HepG2 (cell line): ENCODE measurements at regions of chr2 and their contacts with region 1.

Region 1: DNA sequence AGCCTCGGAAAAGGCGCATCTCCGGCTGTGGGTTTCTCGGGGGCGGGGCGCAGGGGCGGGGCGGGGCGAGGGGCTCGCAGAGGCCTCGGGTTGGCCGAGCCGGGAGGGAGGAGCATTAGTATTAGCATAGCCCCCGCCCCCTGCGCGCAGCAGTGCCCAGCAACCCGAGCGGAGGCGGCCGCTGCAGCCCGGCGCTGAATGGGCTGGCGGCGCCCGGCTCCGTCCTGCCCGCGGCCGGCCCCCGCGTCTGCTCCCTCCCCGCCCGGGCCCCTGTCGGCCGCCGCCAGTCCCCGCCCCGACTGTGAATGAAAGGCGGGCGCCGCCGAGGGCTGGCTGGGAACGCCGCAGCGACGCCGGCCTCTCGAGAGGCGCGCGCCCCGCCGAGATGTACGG is at the start of gene EFR3B:
- DNase-seq: peak; percentile 89
- ATAC-seq: peak; percentile 97
- H3K4me3 ChIP-seq: peak within 1 kb of the TSS; percentile 64 to 80 (median 80)
- H3K27ac ChIP-seq: no peak within 1 kb of the TSS
- H3K4me1 ChIP-seq: peaks cover 21% of the 10 kb centered on the region
- H3K27me3 ChIP-seq: peaks cover 0 to 48% of the 10 kb centered on the region in 2 experiments; a peak in 3 of 5 replicates
- CTCF ChIP-seq: no peak
- EP300 ChIP-seq: no peak
- POLR2A ChIP-seq: no peak
- RAD21 ChIP-seq: no peak
- total RNA-seq, gene EFR3B: 0.42 and 0.56 TPM in 2 replicates

Region 2: GRCh38 chr2:24021193-24021998 is 1020.5 kb before region 1 on chr2:
- CTCF ChIA-PET with region 1: no interaction called
- POLR2A ChIA-PET with region 1: no interaction called
- in situ Hi-C with region 1: no loop called
- intact Hi-C with region 1: no loop called
- DNase-seq: peak; percentile 61
- ATAC-seq: peak; percentile 84
- H3K4me3 ChIP-seq: no peak overlapping the region
- H3K27ac ChIP-seq: peak overlapping the region; percentile 41
- H3K4me1 ChIP-seq: peaks cover 43% of the 10 kb centered on the region
- H3K27me3 ChIP-seq: no peaks in the 10 kb centered on the region
- CTCF ChIP-seq: peak; percentile 95
- EP300 ChIP-seq: no peak
- POLR2A ChIP-seq: no peak
- RAD21 ChIP-seq: peak; percentile 97

Region 3: GRCh38 chr2:24509425-24509824 is 532.5 kb before region 1 on chr2:
- CTCF ChIA-PET with region 1: no interaction called
- POLR2A ChIA-PET with region 1: no interaction called
- in situ Hi-C with region 1: no loop called
- intact Hi-C with region 1: no loop called
- DNase-seq: no peak
- ATAC-seq: no peak
- H3K4me3 ChIP-seq: no peak overlapping the region
- H3K27ac ChIP-seq: no peak overlapping the region
- H3K4me1 ChIP-seq: no peaks in the 10 kb centered on the region
- H3K27me3 ChIP-seq: no peaks in the 10 kb centered on the region
- CTCF ChIP-seq: no peak
- EP300 ChIP-seq: no peak
- POLR2A ChIP-seq: no peak
- RAD21 ChIP-seq: no peak

Region 4: DNA sequence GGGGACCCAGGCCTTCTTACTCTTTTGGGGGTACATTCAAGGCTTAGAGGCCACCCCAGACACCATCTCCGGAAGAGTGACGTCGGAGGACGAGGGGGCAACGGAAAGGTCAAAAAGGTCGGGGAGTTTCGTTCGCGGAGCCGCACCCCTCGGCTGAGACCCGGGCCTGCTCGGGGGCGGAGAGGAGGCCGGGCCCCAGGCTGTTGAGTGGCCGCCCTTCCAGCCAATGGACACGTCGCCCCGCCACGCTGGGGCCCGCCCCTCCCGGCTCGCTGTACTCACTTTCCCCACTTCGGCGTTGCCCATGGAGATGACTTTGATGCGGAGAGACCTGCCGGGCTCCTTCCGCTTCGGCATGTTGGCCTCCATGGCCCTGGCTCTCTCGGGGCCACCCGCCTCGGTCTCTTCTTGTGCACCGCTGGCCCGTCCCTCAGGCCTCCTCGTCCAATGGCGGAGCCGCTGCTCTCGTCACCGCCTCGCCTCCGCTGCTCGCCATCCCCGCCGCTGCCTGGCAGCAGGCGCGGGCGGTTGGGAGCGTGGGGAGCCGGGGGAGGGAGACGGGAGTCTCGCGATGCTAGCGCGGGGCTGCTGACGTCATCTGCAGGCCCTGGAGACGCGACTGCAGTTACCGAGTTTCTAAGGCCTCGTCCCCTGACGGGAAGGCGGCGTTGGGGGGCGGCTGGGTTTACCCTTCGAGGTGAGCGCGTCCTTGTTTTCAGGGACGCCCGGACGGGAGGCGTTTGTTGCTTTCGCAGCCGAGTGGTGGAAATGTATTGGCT is 70.2 kb before region 1 on chr2 and contains the start of gene DNAJC27:
- CTCF ChIA-PET with region 1: interaction called, 4 read pairs
- POLR2A ChIA-PET with region 1: interaction called, 6 read pairs
- in situ Hi-C with region 1: no loop called
- intact Hi-C with region 1: loop called (anchors 1 kb)
- DNase-seq: peak; percentile 95
- ATAC-seq: peak; percentile 97
- H3K4me3 ChIP-seq: peak within 1 kb of the TSS; percentile 80 to 90 (median 88)
- H3K27ac ChIP-seq: peak within 1 kb of the TSS; percentile 95
- H3K4me1 ChIP-seq: peaks cover 23% of the 10 kb centered on the region
- H3K27me3 ChIP-seq: no peaks in the 10 kb centered on the region; a peak in 1 of 5 replicates
- CTCF ChIP-seq: peak; percentile 20; the same call in 1 of the 2 replicates
- EP300 ChIP-seq: 0 out of 4 replicates have a peak, but pooled peaks of 1 of the 2 experiments have one; percentile 9
- POLR2A ChIP-seq: peak; percentile 95
- RAD21 ChIP-seq: peak; percentile 13; the same call in 1 of the 2 replicates
- total RNA-seq, gene DNAJC27: 2.3 and 3.1 TPM in 2 replicates

Region 5: GRCh38 chr2:24981411-24982136 is 60.4 kb before region 1 on chr2:
- CTCF ChIA-PET with region 1: no interaction called
- POLR2A ChIA-PET with region 1: interaction called, 4 read pairs
- in situ Hi-C with region 1: no loop called
- intact Hi-C with region 1: loop called (anchors 2 kb)
- DNase-seq: no peak
- ATAC-seq: no peak
- H3K4me3 ChIP-seq: no peak overlapping the region
- H3K27ac ChIP-seq: no peak overlapping the region
- H3K4me1 ChIP-seq: peaks cover 38% of the 10 kb centered on the region
- H3K27me3 ChIP-seq: peaks cover 0 to 5% of the 10 kb centered on the region in 2 experiments; a peak in 2 of 5 replicates
- CTCF ChIP-seq: no peak
- EP300 ChIP-seq: no peak
- POLR2A ChIP-seq: no peak
- RAD21 ChIP-seq: no peak